ENCODE measurements at regions of chr4 and their contacts with region 1.

Region 1: GRCh38 chr4:931960-932712 is at the starts of genes GAK and TMEM175:
- DNase-seq: peak; percentile 80 to 98
- H3K4me3 ChIP-seq: peak within 1 kb of the TSS; percentile 76 to 82
- H3K27ac ChIP-seq: peak within 1 kb of the TSS; percentile 88
- H3K4me1 ChIP-seq: peaks cover 11 to 26% of the 10 kb centered on the region in 2 donors
- H3K27me3 ChIP-seq: no peaks in the 10 kb centered on the region
- CTCF ChIP-seq: peak in 1 of 3 experiments; percentile 2
- total RNA-seq, gene GAK: 87.3 TPM
- total RNA-seq, gene TMEM175: 41.2 TPM

Region 2: DNA sequence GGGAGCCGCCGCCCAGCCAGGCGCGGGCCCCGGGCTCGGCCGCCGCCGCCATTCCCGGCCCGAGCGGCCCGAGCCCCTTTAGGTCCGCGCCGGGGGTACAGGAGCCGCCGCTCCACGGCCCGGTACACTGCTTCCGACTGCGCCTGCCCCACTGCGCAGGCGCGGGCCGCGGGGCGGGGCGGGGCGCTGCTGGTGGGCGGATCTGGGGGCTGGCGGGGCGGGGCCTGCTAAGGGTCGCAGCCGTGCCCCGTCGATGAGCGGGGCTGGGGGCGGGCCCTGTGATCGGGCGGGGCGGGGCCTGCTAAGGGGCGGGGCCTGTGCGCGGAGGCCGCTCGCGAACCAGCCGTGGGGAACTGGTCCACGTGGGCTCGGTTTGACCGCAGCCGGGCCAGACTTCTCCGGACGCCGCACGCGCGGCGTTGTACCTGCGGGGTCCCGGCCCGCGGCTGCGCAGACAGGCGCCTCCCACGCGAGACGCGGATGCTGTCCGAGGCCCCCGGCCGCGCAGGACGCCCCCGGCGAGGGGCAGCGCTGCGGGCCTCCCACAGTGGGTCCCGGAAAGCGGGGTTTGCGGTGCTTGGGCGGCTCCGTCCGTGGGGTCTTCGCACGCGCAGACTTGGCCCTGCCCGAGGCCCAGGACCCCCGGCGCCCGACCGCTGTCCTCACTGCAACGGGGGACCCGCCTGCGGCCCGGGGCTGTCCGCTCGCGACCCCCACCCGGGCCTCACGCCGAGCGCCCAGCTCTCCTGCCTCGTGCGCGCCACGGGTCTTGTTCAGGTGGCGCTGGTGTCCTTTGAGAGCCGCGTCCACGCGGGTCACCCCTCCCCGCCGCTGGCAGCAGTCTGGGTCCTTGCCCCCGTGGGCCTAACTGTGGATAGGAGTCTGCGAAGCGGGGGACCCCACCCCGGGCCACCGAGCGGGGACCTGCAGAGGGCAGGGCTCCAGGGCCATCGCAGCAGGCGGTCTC is 41.6 kb after region 1 on chr4 and contains the start of gene DGKQ:
- intact Hi-C with region 1: loop called (anchors 1 kb)
- DNase-seq: peak; percentile 45 to 92
- H3K4me3 ChIP-seq: peak within 1 kb of the TSS; percentile 84 to 92
- H3K27ac ChIP-seq: no peak within 1 kb of the TSS
- H3K4me1 ChIP-seq: peaks cover 9 to 16% of the 10 kb centered on the region in 2 donors
- H3K27me3 ChIP-seq: no peaks in the 10 kb centered on the region
- CTCF ChIP-seq: no peak
- total RNA-seq, gene DGKQ: 20.1 TPM

Region 3: DNA sequence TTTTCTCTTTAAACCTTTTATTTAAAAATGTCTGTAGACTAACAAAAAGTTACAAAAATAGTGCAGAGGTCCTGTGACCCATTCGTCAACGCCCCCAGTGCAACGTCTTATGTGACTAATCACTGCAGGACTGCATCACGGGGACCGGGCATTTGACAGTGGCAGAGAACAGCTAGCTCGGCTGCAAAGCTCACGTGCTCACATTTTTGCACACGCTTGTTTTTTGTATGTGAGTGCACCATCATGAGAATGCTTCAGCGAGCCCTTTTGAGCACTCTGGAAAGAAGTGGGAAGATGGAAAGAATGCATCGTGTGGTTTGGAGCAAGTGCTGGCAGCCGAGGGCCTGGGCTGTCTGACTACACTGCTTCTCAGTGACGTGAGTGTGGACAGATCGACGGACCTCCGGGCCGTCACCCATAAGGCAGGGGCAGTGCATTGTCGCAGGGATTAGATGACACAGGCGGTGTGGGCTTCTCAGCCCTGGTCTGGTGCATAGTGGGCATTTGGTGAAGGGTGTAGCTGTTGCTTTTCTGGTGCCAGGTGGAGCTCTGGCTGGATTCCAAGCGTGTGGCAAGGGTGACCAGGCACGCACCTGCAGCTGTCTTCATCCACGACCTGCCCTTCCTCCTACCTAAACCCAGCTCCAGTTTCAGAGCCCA is 222.5 kb after region 1 on chr4:
- intact Hi-C with region 1: loop called (anchors 10 kb)
- DNase-seq: peak; percentile 67 to 93
- H3K4me3 ChIP-seq: peak overlapping the region in 1 of 2 donors; percentile 48
- H3K27ac ChIP-seq: peak overlapping the region; percentile 77 to 79
- H3K4me1 ChIP-seq: peaks cover 9 to 12% of the 10 kb centered on the region in 2 donors
- H3K27me3 ChIP-seq: no peaks in the 10 kb centered on the region
- CTCF ChIP-seq: no peak

Region 4: DNA sequence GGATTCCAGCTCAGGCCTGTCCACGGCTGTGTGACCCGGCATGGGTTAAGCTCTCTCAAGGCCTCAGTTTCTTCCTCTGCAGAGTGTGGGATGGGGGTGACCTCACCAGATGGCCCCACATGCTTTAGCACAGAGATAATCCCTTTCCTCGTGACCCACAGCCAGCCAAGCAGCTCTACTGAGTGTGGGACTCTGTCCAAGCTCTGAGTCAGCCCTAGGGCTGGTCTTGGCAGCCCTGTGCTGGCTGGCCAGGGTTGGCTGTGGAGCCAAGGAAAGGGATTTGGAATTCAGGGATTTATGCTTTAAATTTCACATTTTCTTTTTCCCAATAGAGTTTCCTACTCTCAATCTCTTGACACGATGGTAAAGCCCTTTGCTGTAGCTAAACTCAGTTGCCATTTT is 260.0 kb after region 1 on chr4:
- intact Hi-C with region 1: loop called (anchors 5 kb)
- DNase-seq: peak; percentile 76 to 94
- H3K4me3 ChIP-seq: peak overlapping the region in 1 of 2 donors; percentile 25
- H3K27ac ChIP-seq: peak overlapping the region; percentile 79 to 87
- H3K4me1 ChIP-seq: peaks cover 18 to 23% of the 10 kb centered on the region in 2 donors
- H3K27me3 ChIP-seq: no peaks in the 10 kb centered on the region
- CTCF ChIP-seq: no peak

Measured in ascending aorta (tissue), 2 donors.